Ascending aorta (tissue), 2 donors: ENCODE measurements at regions of chr11 and their contacts with region 1.

Region 1: DNA sequence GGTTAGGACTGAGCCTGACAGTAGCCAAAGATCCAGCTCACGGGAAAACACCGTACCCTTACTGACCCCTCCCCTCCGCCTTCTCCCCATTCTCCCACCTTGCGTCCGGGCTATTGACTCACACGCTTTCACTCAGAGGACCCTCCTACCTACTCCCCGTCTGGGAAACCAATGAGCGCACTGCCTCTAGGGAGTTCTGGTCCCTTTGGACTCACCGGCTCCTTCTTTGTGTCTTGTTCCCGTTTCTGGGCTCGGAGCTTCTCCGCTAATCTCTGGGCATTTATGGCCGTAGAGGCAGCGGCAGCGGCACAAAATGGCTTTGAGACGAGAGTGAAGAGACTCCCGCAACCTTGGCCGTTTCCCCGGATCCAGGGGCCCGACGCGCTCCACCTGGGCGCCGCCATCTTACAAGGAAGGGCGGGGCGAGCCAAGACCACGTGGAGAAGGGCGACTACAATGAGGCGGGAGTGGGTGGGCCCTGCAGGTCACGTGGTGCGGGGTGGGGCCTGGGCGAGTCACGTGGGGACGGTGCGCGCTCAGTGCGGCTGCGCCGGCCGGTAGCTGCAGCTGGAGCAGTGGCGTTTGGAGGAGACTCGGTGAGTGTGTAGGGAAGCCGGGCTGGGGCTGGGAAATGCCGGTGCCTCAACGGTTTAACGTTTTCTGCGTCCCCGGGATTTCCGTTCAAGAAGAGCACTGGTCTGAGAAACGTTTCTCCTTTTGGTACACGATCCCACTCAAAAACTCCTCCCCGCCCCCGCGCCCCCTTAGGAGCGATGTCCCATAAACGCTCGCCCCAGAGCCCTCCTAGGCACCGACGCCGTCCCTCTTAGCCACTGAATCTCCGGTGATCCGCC is at the starts of genes FAM118B and RPUSD4:
- DNase-seq: peak; percentile 90 to 99
- H3K4me3 ChIP-seq: peak within 1 kb of the TSS; percentile 78 to 89
- H3K27ac ChIP-seq: peak within 1 kb of the TSS; percentile 6 to 42
- H3K4me1 ChIP-seq: peaks cover 0 to 5% of the 10 kb centered on the region in 2 donors
- H3K27me3 ChIP-seq: no peaks in the 10 kb centered on the region
- CTCF ChIP-seq: no peak
- total RNA-seq, gene FAM118B: 14.0 TPM
- total RNA-seq, gene RPUSD4: 7.3 TPM

Region 2: GRCh38 chr11:126062679-126063506 is 148.6 kb before region 1 on chr11 and contains the start of gene CDON:
- intact Hi-C with region 1: loop called (anchors 1 kb)
- DNase-seq: peak; percentile 43 to 93
- H3K4me3 ChIP-seq: peak within 1 kb of the TSS; percentile 78 to 89
- H3K27ac ChIP-seq: peak within 1 kb of the TSS; percentile 64 to 68
- H3K4me1 ChIP-seq: peaks cover 0 to 8% of the 10 kb centered on the region in 2 donors
- H3K27me3 ChIP-seq: no peaks in the 10 kb centered on the region
- CTCF ChIP-seq: peak in 1 of 3 experiments; percentile 12
- total RNA-seq, gene CDON: 33.0 TPM

Region 3: DNA sequence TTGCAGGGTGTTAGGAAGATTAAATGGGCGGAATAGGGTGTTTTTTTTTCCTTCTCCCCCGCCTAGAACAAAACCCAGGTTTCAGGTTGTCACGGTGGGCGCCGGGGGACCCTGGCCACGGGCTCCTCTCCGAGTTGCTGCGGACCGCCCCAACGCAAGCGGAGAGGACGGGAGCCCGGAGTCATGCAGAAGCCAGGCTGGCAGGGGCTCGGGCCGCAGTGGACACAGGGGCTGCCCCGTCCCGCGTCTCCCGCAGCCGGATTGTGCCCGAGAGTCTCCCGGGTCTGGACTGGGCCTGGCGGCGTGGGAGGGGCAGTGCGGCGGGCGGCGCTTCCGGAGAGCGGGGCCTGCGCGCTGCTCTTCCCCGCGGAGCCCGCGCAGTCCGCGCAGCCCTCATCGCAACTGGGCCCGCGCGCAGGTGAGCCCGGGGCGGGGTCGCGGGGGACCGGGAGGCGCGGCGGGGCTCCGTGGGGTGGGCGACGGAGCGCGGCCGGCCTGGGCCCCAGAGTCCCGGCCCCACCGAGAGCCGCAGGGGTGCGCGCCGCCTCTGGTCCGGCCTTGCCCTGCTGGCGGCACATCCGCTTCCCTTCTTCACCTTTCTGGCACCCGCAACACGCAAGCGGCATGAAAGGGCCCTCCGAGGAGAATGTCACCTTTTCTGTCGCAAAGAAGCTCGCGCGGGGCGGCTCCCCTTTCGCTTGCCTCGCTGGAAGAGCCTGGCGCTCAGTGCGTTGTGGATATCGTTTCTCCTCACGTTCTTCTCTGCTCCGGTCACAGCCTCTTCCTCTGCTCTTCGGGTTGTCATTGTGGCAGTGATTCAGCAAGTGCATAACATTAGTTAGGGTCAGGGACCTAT is 71.5 kb after region 1 on chr11 and contains the start of gene TIRAP:
- intact Hi-C with region 1: loop called (anchors 5 kb)
- DNase-seq: peak; percentile 24 to 83
- H3K4me3 ChIP-seq: peak within 1 kb of the TSS; percentile 81 to 86
- H3K27ac ChIP-seq: peak within 1 kb of the TSS; percentile 87 to 94
- H3K4me1 ChIP-seq: peaks cover 0 to 6% of the 10 kb centered on the region in 2 donors
- H3K27me3 ChIP-seq: no peaks in the 10 kb centered on the region
- CTCF ChIP-seq: no peak
- total RNA-seq, gene TIRAP: 8.7 TPM

Region 4: GRCh38 chr11:126355324-126355925 is 144.0 kb after region 1 on chr11 and contains the start of gene ST3GAL4:
- intact Hi-C with region 1: loop called (anchors 5 kb)
- DNase-seq: peak in 1 of 2 donors; percentile 83
- H3K4me3 ChIP-seq: peak within 1 kb of the TSS; percentile 84 to 88
- H3K27ac ChIP-seq: peak within 1 kb of the TSS; percentile 80 to 86
- H3K4me1 ChIP-seq: peaks cover 22 to 53% of the 10 kb centered on the region in 2 donors
- H3K27me3 ChIP-seq: no peaks in the 10 kb centered on the region
- CTCF ChIP-seq: no peak
- total RNA-seq, gene ST3GAL4: 61.4 TPM